Heart right ventricle (tissue), 16 donors: ENCODE measurements at regions of chr19 and their contacts with region 1.

Region 1: DNA sequence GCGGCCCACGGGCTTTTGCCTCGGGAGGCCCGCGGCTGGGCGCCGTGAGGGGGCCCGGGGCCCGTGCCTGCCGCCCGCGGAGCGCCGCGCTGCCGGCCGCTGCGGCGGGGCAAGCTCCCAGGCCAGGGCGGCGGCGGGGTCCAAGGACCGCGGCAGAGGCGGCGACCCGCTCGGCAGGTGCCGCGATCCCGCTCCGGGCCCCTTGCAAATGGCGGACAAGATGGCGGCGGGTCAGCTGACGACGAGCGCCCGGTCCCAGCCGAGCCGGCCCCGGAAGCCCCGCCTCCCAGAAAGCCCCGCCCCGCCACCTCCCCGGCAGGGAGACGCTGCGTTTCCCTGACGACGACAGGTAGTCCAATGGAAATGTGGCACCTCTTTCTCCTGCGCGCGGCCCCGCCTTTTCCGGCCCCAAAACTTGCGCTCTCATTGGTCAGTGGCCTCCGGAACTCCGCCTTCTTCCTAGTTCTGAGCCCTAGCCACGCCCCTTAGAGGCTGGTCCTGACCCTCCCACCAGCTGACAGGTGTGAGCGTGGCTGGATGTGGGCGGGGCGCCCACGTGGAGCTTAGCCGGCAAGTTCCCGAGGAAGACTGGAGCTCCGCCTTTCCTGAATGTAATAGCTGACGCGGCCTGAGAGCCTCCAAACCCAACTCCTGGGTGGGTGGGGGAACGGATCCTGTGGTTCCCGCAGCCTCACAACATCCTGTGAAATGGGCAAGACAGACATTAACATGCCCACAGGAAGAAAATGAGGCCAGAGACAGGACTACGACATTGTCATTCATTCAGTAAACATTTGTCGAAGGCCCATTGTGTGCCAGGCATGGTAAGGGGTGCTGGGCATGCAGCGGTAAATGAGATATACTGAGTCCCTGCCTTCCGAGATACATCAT is at the start of gene AP3D1:
- DNase-seq: peak; percentile 99 to 100
- ATAC-seq: peak; percentile 97 to 98 (median 98)
- H3K4me3 ChIP-seq: peak within 1 kb of the TSS; percentile 71 to 100 (median 95)
- H3K27ac ChIP-seq: peak within 1 kb of the TSS; percentile 76 to 95 (median 90)
- H3K4me1 ChIP-seq: peaks cover 8 to 47% (median 39%) of the 10 kb centered on the region in 9 donors
- H3K27me3 ChIP-seq: no peaks in the 10 kb centered on the region
- CTCF ChIP-seq: no peak
- total RNA-seq, gene AP3D1: 68.4 to 168 (median 81.9) TPM

Region 2: GRCh38 chr19:2096480-2097329 is 54.9 kb before region 1 on chr19 and contains the start of gene IZUMO4:
- intact Hi-C with region 1: loop called in 2 of 10 experiments (anchors 2 to 5 kb)
- DNase-seq: peak; percentile 98 to 100
- ATAC-seq: peak; percentile 88 to 94 (median 90)
- H3K4me3 ChIP-seq: peak within 1 kb of the TSS; percentile 50 to 95 (median 78)
- H3K27ac ChIP-seq: peak within 1 kb of the TSS; percentile 79 to 98 (median 93)
- H3K4me1 ChIP-seq: peaks cover 13 to 54% (median 41%) of the 10 kb centered on the region in 9 donors
- H3K27me3 ChIP-seq: no peaks in the 10 kb centered on the region
- CTCF ChIP-seq: peak in 8 of 9 donors; percentile 13 to 67 (median 44)
- total RNA-seq, gene IZUMO4: 1.2 to 6.5 (median 2.2) TPM

Region 3: DNA sequence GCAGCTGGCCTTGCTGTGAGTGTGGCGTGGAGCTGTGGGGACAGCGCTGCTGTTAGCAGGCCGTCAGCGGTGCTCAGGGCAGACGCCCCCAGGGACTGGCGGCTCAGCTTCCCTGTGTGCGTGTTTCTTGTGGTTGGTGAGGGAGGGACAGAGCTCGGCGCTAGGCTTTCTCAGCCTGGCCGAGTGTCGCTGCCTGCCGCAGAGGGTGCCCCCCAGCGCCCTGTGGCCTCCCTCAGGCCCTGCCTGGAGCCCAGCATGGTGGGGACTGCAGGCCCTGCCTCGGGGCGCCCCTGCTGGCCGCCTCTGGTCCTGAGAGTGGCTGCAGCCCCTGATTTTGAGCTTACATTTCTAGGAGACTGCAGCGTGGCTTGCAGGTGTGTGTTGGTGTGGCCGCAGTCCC is 47.6 kb after region 1 on chr19:
- intact Hi-C with region 1: loop called in 1 of 10 experiments (anchors 5 kb)
- DNase-seq: no peak
- ATAC-seq: peak; percentile 34 to 63 (median 49)
- H3K4me3 ChIP-seq: no peak overlapping the region
- H3K27ac ChIP-seq: no peak overlapping the region
- H3K4me1 ChIP-seq: peaks cover 0 to 9% (median 0%) of the 10 kb centered on the region in 9 donors
- H3K27me3 ChIP-seq: no peaks in the 10 kb centered on the region
- CTCF ChIP-seq: peak in 8 of 9 donors; percentile 14 to 46 (median 36)

Region 4: DNA sequence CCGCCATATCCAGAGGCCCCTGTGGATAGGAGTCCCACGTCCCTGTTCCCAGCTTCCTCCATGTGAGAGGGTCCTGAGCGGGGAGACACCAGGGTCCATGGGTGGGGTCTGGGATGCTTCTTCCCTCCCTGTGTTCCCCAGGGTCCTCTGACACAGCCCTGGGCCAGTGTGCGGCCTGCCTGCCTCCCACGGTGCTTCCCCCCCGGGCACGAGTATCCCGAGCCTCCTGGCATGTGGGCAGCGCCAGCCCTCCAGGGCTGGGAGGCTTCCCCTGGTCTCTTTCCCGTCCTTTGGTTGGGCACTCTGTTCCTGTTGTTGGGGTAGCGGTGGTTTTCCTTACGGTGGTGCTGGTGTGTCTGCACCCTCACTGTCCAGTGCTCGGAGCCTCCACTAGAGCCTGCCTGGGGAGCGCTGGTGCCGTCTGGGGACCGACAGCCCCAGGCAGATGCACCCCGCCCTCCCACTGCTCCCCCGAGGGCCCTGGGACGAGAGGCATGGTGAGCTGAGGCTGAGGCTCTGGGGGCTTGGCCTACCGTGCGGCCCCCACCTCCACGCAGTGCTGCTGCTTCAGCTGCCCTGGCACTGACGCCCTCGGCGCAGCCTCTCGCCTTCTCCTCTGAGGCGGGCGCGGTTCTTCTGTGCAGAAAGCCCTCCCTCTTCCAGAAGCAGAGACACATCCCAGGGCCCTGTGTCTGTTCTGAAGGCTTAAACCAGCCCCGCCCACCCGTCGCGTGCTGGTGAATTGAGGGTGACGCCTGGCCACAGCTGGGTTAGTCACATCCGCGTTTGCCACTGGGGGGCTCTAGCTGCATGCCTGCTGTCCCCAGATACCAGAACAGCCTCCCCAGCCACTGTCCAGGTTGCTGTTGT is 56.6 kb after region 1 on chr19:
- intact Hi-C with region 1: loop called in 1 of 10 experiments (anchors 5 kb)
- DNase-seq: peak; percentile 67 to 68
- ATAC-seq: peak; percentile 34 to 84 (median 73)
- H3K4me3 ChIP-seq: peak overlapping the region in 1 of 10 donors; percentile 9
- H3K27ac ChIP-seq: peak overlapping the region in 5 of 10 donors; percentile 15 to 44 (median 37)
- H3K4me1 ChIP-seq: peaks cover 6 to 20% (median 16%) of the 10 kb centered on the region in 9 donors
- H3K27me3 ChIP-seq: no peaks in the 10 kb centered on the region
- CTCF ChIP-seq: peak in 6 of 9 donors; percentile 15 to 54 (median 38)

Region 5: DNA sequence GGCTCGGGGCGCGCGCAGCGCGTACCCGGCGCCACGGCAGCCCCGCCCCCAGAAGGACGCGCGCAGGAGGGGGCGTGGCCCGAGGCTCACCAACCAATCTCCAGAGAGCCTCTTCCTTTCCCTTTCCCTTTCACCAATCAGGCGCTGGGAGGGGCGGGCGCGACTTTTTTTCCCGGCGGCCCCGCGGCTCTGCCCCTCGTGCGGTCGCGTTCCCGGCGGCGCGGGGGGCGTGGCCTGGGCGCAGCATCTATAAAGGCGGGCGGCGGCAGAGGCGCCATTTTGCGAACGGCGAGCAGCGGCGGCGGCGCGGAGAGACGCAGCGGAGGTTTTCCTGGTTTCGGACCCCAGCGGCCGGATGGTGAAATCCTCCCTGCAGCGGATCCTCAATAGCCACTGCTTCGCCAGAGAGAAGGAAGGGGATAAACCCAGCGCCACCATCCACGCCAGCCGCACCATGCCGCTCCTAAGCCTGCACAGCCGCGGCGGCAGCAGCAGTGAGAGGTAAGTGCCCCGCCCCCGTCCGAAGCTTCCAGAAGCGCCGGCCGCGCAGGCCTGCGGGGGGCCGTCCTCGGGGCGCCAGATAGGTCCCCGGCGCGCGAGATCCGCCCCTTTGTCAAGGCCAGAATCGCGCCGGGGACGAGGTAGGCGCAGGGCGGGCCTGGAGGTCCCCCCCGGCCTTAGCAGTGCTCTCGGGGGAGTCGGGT is 117.8 kb after region 1 on chr19:
- intact Hi-C with region 1: loop called in 8 of 10 experiments (anchors 1 to 10 kb)
- DNase-seq: peak; percentile 99
- ATAC-seq: peak; percentile 86 to 93 (median 90)
- H3K4me3 ChIP-seq: peak overlapping the region; percentile 89 to 100 (median 100)
- H3K27ac ChIP-seq: peak overlapping the region; percentile 94 to 100 (median 99)
- H3K4me1 ChIP-seq: peaks cover 15 to 77% (median 46%) of the 10 kb centered on the region in 9 donors
- H3K27me3 ChIP-seq: no peaks in the 10 kb centered on the region
- CTCF ChIP-seq: peak in 1 of 9 donors; percentile 17

Region 6: DNA sequence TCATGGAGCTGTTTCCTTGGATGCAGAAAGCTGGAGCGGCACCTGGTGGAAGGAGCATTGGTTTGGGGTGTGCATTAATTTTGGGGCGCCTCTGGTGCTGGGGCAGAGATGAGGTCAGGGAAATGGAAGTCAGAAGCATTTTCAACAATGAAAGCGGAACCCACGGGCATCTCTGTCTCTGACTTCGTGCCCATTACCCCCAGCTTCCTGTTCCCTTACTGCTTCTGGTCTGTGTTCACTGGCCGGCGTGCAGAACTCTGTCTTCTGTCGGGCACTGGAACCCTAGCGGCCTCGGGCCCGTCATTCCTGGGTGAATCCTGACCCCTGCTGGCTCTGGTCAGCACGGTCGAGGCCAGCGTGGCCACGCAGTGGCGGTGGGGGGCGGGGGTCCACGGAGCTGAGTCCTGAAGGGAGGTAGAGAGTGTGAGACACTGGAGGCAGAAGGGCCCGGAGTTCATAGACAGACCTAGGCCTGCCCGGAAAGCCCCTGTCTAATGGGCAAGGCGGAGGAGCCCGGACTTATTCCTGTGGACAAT is 164.3 kb after region 1 on chr19:
- intact Hi-C with region 1: loop called in 6 of 10 experiments (anchors 1 to 5 kb)
- DNase-seq: peak; percentile 71 to 72
- ATAC-seq: peak; percentile 89 to 94 (median 93)
- H3K4me3 ChIP-seq: no peak overlapping the region
- H3K27ac ChIP-seq: peak overlapping the region in 1 of 10 donors; percentile 70
- H3K4me1 ChIP-seq: peaks cover 0 to 22% (median 6%) of the 10 kb centered on the region in 9 donors
- H3K27me3 ChIP-seq: peaks cover 0 to 27% (median 26%) of the 10 kb centered on the region in 7 donors
- CTCF ChIP-seq: peak; percentile 31 to 76 (median 69)

Region 7: GRCh38 chr19:2391118-2391725 is 239.6 kb after region 1 on chr19:
- intact Hi-C with region 1: loop called in 5 of 10 experiments (anchors 1 to 10 kb)
- DNase-seq: peak in 1 of 2 donors; percentile 35
- ATAC-seq: peak in 5 of 8 donors; percentile 33 to 71 (median 43)
- H3K4me3 ChIP-seq: no peak overlapping the region
- H3K27ac ChIP-seq: no peak overlapping the region
- H3K4me1 ChIP-seq: peaks cover 0 to 5% (median 0%) of the 10 kb centered on the region in 9 donors
- H3K27me3 ChIP-seq: peaks cover 0 to 31% (median 6%) of the 10 kb centered on the region in 7 donors
- CTCF ChIP-seq: peak; percentile 62 to 82 (median 74)

Region 8: DNA sequence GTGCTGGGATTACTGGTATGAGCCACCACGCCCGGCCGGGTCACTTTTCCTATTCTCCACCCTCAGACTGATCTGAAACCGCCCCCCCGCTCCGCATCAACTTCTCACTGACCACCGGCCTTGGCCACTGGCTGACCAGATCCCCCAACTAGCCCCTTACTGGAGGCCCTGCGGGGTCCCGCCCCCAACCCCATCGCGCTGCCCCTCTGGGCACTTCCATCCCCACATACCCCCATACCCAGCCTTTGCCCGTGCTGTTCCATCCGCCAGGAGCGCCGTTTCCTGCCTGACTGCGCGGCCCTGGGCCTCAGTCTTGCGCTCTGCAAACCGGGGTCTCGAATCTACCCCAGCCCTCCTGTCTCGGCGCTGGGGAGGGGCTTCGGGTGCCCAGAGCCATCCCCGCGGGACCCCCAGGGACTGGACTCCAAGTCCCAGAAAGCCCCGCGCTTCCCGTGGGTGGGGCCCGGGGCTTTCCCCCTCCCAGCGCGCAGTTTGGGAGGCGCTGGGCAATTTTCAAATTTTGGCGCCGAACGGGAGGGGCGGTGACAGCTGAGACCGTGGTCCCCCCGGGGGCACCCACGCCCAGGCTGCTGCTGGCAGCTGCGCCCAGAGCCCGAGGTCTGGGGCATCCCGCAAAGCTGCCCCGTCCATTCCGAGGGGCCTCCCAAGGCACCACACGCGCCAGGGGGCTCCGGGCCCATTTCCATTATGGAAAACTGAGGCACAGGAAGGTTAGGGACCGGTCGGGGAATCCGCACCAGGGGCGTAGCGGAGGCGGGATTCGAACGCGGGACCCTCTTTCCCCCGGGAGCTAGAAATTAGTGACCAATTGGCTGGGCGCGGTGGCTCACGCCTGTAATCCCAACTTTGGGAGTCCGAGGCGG is 310.4 kb after region 1 on chr19:
- intact Hi-C with region 1: no loop called
- DNase-seq: peak; percentile 45 to 68
- ATAC-seq: peak; percentile 50 to 76 (median 64)
- H3K4me3 ChIP-seq: peak overlapping the region; percentile 5 to 68 (median 60)
- H3K27ac ChIP-seq: peak overlapping the region in 2 of 10 donors; percentile 36 to 66
- H3K4me1 ChIP-seq: peaks cover 5 to 28% (median 22%) of the 10 kb centered on the region in 9 donors
- H3K27me3 ChIP-seq: no peaks in the 10 kb centered on the region
- CTCF ChIP-seq: peak in 3 of 9 donors; percentile 8 to 20 (median 11)